PC-9 (cell line): ENCODE measurements at regions of chr16 and their contacts with region 1.

Region 1: DNA sequence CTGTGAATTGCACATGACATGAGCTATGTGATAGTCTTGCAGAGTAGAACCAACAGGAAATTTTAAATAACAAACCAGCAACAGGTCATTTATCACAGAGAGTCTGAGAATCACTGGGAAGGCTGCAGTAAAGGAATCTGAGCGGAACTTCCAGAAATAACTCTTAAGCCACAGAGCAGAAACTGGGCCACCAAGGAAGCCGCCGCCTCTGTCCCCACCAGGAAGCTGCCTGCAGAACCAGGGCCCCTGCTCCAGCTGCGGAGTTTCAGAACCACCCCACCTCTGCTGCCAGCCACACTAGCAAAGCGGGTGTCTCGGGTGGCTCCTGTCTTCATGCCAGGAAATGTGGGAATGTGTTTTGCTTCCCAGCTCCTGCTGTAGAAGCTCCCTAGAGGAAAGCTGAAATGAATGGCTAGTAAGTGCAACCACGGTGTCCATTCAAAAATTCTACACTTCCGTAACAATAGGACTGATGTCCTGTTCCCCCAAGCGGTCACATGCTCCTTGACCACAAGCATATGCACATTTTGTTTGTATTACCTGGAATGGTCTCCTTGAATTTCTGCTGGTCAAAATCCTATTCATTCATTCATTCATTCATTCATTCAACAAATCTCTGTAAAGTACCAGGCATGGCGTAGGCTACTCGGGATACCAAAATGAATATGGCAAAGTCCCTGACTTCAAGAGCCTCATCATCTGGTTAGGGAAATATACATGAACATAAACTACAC is 7.7 kb upstream of the ITPRIPL2 start:
- DNase-seq: no peak
- H3K4me3 ChIP-seq: no peak overlapping the region
- H3K27ac ChIP-seq: peak overlapping the region; percentile 95
- H3K4me1 ChIP-seq: peaks cover 37% of the 10 kb centered on the region
- H3K27me3 ChIP-seq: no peaks in the 10 kb centered on the region
- CTCF ChIP-seq: no peak

Region 2: GRCh38 chr16:18789850-18790724 is 316.0 kb before region 1 on chr16 and contains the start of gene RPS15A:
- CTCF ChIA-PET with region 1: no interaction called
- POLR2A ChIA-PET with region 1: interaction called, 14 read pairs
- intact Hi-C with region 1: no loop called
- DNase-seq: peak; percentile 94 to 97
- H3K4me3 ChIP-seq: peak within 1 kb of the TSS; percentile 90
- H3K27ac ChIP-seq: peak within 1 kb of the TSS; percentile 81
- H3K4me1 ChIP-seq: peaks cover 42% of the 10 kb centered on the region
- H3K27me3 ChIP-seq: no peaks in the 10 kb centered on the region
- CTCF ChIP-seq: no peak
- total RNA-seq, gene RPS15A: 1,449 and 1,977 TPM in 2 replicates

Region 3: DNA sequence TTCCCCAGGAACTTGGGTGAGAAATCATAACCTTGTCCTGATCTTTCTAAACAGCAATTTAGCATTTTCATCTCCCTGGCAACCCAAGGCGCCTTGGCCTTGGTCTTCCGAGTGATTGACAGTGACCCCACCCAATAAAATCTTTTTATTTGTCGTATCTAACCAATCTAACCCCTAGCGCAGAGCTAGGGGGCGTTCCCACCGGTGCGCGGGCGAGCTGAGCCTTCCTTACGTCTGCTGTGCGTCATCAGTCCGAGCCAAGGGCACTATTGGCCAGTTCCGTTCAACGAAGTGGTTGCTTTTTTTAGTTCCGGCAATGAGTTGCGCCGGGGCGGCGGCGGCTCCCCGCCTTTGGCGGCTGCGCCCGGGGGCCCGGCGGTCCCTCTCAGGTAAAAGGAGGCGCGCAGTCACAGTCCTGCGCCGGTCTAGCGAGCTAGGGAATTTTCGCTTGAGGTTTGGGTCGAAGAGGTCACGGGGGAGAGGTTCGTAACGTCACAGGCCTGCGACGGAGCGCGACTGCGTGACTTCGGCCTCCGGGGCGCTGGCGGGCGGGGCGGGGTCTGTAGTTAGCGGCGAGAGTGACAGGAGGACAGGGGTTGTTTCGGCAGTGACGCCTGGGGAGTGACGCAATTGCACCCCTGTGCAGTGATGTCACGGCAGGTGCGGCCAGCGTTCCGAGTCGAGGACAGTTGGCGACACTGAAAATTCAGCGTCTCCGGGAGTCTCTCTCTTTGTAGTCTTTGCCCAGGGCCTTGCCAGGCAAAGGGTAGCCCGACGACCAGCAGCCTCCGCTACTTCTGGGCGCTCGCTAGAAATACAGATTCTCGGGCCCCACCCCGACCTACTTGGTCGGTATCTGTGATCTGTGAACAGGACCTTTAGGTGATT is 38.5 kb before region 1 on chr16 and contains the start of gene COQ7:
- CTCF ChIA-PET with region 1: no interaction called
- POLR2A ChIA-PET with region 1: no interaction called
- intact Hi-C with region 1: no loop called
- DNase-seq: peak; percentile 98
- H3K4me3 ChIP-seq: peak within 1 kb of the TSS; percentile 88
- H3K27ac ChIP-seq: peak within 1 kb of the TSS; percentile 97
- H3K4me1 ChIP-seq: peaks cover 9% of the 10 kb centered on the region; the same call in 1 of the 2 replicates
- H3K27me3 ChIP-seq: no peaks in the 10 kb centered on the region
- CTCF ChIP-seq: 0 out of 2 replicates have a peak, but pooled peaks have one; percentile 25
- total RNA-seq, gene COQ7: 26.9 and 30.7 TPM in 2 replicates

Region 4: GRCh38 chr16:19094541-19095365 is 11.3 kb before region 1 on chr16:
- CTCF ChIA-PET with region 1: no interaction called
- POLR2A ChIA-PET with region 1: interaction called, 13 read pairs
- intact Hi-C with region 1: loop called (anchors 1 kb)
- DNase-seq: no peak
- H3K4me3 ChIP-seq: no peak overlapping the region
- H3K27ac ChIP-seq: peak overlapping the region; percentile 99
- H3K4me1 ChIP-seq: peaks cover 46% of the 10 kb centered on the region
- H3K27me3 ChIP-seq: no peaks in the 10 kb centered on the region
- CTCF ChIP-seq: no peak

Region 5: DNA sequence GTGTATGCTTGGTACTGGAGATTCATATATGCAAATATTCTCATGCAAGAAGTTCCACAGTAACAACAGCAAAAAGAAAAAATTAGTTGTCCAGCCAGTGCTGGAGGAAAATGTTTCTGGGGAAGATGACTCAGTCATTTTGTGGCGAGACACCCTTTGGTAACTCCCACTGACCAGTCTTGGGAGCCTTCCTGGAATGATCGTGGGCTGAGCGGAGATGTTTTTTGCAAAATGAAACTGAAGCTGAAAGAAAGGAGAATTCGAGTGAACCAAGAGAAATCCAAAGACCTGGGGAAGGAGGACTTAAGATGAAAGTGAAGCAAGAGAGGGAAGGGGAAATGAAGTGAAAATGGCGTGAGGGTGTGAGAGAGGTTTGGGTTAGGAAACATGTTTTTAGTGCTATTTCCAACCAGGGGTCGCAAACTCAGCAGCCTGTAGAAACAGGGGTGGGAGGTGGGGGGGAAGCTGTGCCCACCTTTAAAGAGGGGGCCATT is 12.9 kb after region 1 on chr16:
- CTCF ChIA-PET with region 1: interaction called, 23 read pairs
- POLR2A ChIA-PET with region 1: interaction called, 12 read pairs
- intact Hi-C with region 1: no loop called
- DNase-seq: peak; percentile 73 to 84
- H3K4me3 ChIP-seq: peak overlapping the region; percentile 59
- H3K27ac ChIP-seq: peak overlapping the region; percentile 96
- H3K4me1 ChIP-seq: peaks cover 66% of the 10 kb centered on the region
- H3K27me3 ChIP-seq: no peaks in the 10 kb centered on the region
- CTCF ChIP-seq: no peak